Posterior vena cava (tissue), 2 donors: ENCODE measurements at regions of chr6 and their contacts with region 1.

Region 1: GRCh38 chr6:79440598-79440997 is 96.6 kb downstream of the LCA5 start:
- DNase-seq: no peak

Region 2: GRCh38 chr6:79452744-79453143 is 12.1 kb after region 1 on chr6:
- intact Hi-C with region 1: loop called in 1 of 2 experiments (anchors 1 kb)
- DNase-seq: no peak